Heart right ventricle (tissue), 16 donors: ENCODE measurements at regions of chr1 and their contacts with region 1.

Region 1: DNA sequence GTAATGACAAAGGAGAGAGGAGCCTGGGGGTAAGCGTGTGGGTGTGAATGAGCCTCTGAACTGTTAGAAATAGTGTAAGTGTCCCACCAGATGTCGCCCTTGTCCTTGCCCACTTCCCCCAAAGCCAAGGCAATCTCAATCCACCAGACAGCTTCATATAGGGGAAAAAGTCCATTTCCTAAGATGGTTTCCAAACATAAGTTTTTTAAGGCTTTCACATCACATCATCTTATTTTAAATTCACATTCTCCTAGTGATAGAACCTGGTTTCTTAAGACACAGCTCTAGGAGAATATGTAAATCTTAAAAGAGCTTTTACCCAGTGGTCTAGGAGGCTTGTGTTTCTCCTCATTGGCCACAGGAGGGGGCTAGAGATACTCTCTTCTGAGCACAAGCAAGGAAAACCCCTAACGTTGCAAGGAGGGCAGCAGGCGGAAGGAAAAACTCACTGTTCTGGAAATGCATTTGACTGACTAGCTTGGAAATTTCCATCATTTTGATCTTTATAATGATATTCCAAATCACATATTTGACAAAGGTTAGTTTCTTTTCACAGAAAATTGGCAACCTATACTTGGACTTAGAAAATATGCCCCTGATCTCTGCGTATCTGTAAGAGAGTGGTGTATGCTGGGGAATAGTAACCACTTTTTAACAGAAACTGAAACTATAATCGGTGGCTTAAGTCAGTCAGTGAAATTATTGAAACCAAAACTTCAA is 51.9 kb upstream of the LPAR3 start:
- DNase-seq: peak; percentile 25 to 79
- ATAC-seq: peak; percentile 93 to 99 (median 96)
- H3K4me3 ChIP-seq: peak overlapping the region in 9 of 10 donors; percentile 18 to 59 (median 50)
- H3K27ac ChIP-seq: peak overlapping the region in 8 of 10 donors; percentile 29 to 82 (median 68)
- H3K4me1 ChIP-seq: peaks cover 0 to 13% (median 5%) of the 10 kb centered on the region in 9 donors
- H3K27me3 ChIP-seq: peaks cover 0 to 4% (median 0%) of the 10 kb centered on the region in 7 donors
- CTCF ChIP-seq: peak; percentile 79 to 96 (median 92)

Region 2: DNA sequence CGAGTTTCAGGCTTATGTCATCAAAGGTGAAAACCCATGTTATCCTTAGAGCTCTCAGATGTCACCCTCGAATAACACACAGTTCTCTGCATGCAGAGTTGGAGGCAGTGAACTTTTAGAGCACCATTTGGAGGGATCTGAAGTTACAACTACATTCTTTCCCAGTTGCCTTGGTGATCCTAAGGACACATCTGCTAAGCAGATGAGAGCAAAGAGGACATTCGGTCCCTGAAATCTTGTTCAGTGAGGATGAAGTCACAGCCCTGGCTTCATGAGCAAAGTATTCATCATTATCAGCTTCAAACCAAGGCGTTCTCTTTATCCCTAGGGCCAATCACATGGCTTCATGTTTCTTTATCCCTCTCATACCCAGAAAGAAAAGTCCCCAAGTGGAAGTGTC is 75.1 kb after region 1 on chr1:
- intact Hi-C with region 1: loop called in 7 of 10 experiments (anchors 5 to 10 kb)
- DNase-seq: no peak
- ATAC-seq: peak in 3 of 8 donors; percentile 25 to 57 (median 34)
- H3K4me3 ChIP-seq: no peak overlapping the region
- H3K27ac ChIP-seq: no peak overlapping the region
- H3K4me1 ChIP-seq: no peaks in the 10 kb centered on the region
- H3K27me3 ChIP-seq: peaks cover 0 to 3% (median 0%) of the 10 kb centered on the region in 7 donors
- CTCF ChIP-seq: no peak

Region 3: DNA sequence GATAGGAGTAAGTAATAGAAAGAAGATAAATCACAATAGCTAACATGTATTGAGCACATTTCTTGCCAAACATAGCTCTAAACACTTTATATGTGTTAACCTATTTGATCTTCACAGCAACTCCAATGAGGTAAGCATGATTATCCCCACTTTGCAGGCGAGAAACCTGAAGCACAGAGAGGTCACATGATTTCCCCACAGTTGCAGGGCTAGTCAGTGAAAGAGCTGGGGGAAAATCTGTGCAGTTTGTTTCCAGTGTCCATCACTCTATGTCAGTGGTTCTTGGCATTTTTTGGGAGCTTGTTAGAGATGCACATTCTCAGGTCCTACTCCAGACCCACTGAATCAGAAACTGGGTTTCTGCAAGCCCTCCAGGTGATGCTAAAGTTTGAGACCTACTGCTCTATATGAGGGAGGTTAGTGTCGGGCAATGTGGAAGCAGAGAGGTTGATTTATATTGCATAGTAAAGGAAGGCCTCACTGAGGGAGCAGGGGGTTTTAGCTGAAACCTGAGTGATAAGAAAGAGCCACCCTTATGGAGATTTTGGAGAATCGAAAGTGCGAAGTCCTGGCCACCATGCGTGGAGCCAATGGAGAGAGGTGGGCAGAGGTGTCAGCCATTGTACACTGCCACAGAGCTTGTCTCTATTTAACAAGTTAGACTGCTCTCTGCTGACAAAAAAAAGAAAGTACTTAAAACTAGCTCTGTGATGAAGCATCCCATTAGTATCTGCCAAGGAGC is 82.5 kb after region 1 on chr1:
- intact Hi-C with region 1: loop called in 9 of 10 experiments (anchors 2 to 10 kb)
- DNase-seq: no peak
- ATAC-seq: peak in 6 of 8 donors; percentile 42 to 58 (median 54)
- H3K4me3 ChIP-seq: no peak overlapping the region
- H3K27ac ChIP-seq: peak overlapping the region in 1 of 10 donors; percentile 40
- H3K4me1 ChIP-seq: no peaks in the 10 kb centered on the region
- H3K27me3 ChIP-seq: no peaks in the 10 kb centered on the region
- CTCF ChIP-seq: peak in 4 of 9 donors; percentile 7 to 39 (median 24)

Region 4: DNA sequence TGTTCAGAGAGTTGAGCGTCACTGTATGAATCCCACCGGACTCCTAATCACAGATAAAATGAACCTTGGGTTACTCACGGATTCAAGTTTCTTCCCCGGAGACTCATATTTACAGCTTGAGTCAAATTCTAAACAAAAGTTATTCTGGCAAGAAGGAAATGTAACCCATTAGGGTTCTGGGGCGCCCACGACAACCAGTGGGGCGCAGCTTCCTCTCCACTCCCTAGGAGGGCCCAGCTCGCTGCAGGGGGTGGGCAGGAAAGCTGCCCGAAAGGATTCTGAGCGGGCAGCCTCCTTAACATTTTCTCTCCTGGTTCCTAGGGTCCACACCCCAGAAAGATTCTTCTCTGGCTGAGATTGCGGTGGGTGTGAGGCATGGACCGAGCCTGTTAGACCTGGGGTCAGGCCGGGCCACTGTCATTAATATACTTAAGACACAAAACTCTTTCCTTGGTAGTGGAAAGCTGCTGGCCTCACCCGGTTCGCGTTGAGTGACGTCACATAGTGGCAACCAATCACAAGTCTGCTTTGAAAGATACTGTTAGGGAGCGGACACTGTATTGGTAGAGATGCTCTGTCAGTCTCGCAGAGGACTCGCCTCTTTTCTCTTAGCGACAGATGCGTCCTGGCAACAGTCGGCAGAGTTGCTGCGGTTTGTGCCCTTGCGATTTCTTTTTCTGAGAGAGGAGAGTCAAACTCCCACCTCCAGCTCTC is 116.9 kb after region 1 on chr1:
- intact Hi-C with region 1: loop called in 2 of 10 experiments (anchors 10 kb)
- DNase-seq: peak; percentile 65 to 96
- ATAC-seq: peak; percentile 99 to 100 (median 99)
- H3K4me3 ChIP-seq: peak overlapping the region; percentile 4 to 66 (median 56)
- H3K27ac ChIP-seq: peak overlapping the region in 8 of 10 donors; percentile 29 to 82 (median 64)
- H3K4me1 ChIP-seq: peaks cover 0 to 17% (median 0%) of the 10 kb centered on the region in 9 donors
- H3K27me3 ChIP-seq: no peaks in the 10 kb centered on the region
- CTCF ChIP-seq: no peak

Region 5: DNA sequence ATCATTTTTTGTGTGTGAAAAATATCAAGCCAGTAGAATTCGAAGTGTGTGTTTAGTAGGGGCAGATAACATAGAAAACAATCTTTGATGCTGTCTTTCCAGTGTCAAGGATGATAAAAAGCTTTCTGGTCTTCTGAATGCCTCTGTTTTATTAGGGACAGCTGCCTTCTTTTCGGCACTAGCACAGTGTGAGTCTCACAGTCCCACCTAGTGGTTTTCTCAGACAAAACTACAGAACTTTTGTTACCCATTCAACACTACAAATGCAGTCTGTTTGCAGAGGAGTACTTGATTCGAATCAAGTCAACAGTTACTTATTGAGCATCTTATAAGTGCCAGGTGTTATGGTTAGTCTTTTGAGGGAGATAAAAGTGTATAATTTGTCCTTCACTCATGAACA is 134.0 kb after region 1 on chr1:
- intact Hi-C with region 1: loop called in 2 of 10 experiments (anchors 10 kb)
- DNase-seq: no peak
- ATAC-seq: no peak
- H3K4me3 ChIP-seq: no peak overlapping the region
- H3K27ac ChIP-seq: no peak overlapping the region
- H3K4me1 ChIP-seq: no peaks in the 10 kb centered on the region
- H3K27me3 ChIP-seq: no peaks in the 10 kb centered on the region
- CTCF ChIP-seq: peak in 2 of 9 donors; percentile 21 to 36

Region 6: DNA sequence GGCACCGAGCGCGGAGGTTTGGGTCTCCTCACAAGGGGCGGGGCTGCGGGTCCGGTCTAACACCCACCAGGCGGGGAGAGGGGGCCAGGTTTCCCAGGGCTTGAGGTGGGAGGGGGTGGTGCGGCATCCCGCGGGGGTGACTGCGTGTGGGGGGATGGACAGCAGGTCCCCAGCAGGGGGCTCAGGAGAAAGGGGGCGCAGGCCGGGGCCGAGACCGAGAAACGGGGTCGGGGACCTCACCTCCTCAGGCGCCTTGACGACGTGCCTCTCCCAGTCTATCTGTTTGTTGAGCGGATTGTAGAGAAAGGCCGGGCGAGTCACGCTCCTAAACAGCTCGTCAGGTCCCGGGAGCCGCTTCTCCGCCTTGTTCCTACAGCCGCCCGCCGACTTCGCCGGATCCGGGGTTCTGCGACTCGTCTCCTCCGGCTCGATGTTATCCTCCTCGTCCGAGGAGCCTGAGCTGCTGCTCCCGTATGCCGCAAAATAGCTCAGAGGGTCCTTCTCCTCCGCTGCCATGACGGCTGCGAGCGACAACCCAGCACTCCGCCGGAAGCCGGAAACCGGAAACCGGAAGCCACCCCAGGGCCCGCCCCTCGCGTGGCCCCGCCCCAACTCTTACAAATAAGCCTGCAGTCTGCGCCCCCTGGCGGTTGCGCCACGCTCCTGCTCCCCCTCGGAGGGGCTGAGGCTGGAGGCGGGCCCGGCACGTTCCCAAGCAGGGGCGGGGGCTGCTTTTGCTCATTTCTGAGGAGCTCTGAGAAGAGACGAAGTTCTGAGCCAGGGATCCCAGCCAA is 314.4 kb after region 1 on chr1 and contains the start of gene C1orf52:
- intact Hi-C with region 1: loop called (anchors 2 to 10 kb)
- DNase-seq: peak; percentile 96 to 97
- ATAC-seq: peak; percentile 97 to 99 (median 98)
- H3K4me3 ChIP-seq: peak within 1 kb of the TSS; percentile 76 to 98 (median 90)
- H3K27ac ChIP-seq: peak within 1 kb of the TSS; percentile 78 to 95 (median 87)
- H3K4me1 ChIP-seq: peaks cover 6 to 47% (median 32%) of the 10 kb centered on the region in 9 donors
- H3K27me3 ChIP-seq: no peaks in the 10 kb centered on the region
- CTCF ChIP-seq: peak; percentile 95 to 100 (median 99)
- total RNA-seq, gene C1orf52: 12.8 to 21.3 (median 15.0) TPM